Activated CD8-positive, alpha-beta T cell treated with anti-CD3 and anti-CD28 coated beads, Interleukin-2, amount 10 ng/mL, durations not matched to agents 7 days and 5 days (primary cell): ENCODE measurements at regions of chr3 and their contacts with region 1.

Region 1: DNA sequence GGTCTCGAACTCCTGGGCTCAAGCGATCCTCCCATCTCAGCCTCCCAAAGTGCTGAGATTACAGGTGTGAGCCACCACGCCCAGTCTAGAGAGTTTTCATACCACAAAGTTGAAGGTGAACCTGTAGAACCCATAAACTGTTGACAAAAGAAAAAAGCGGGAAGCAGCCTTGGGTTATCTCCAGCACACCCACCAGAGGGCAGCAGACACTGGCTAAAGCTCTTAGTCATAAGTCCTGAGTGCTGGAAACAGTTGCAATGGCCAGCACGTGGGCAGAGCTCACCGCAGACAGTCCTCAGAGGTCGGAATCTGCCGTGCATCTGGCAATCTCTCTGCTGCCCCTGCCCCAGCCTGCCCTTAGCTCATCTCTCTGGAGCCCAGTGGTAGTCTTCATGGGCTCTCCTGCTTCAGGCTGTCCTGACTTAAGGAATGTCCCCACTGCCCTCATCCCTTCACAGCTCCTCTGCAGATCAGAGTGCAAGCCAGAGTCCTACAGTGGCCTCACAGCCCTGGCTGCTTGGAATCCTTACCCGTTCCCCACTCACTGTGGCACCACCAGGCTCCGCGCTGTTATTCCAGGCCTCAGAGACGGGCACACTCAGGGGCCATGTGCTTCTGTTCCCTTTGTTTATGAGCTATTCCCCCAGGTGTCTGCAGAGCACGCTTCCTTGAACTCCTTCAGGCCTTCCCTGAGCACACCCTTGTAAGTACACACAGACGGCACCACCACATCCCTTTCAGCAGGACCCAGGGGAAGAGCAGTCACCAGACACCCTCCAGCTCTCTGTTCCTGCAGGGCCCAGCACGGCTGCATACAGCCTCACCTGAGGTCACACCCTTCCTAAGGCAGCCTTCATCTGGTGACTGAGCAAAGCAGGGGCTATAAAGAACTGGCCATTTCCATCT is 8.8 kb upstream of the ELP6 start:
- DNase-seq: peak; percentile 88
- ATAC-seq: peak; percentile 93
- H3K4me3 Mint-ChIP-seq: no peak overlapping the region
- H3K27ac Mint-ChIP-seq: peak overlapping the region; percentile 14
- H3K4me1 Mint-ChIP-seq: peaks cover 14% of the 10 kb centered on the region
- H3K27me3 Mint-ChIP-seq: no peaks in the 10 kb centered on the region

Region 2: GRCh38 chr3:47533481-47533880 is 11.1 kb after region 1 on chr3:
- CTCF ChIA-PET with region 1: interaction called, 16 read pairs
- POLR2A ChIA-PET with region 1: no interaction called
- DNase-seq: no peak
- ATAC-seq: no peak
- H3K4me3 Mint-ChIP-seq: no peak overlapping the region
- H3K27ac Mint-ChIP-seq: no peak overlapping the region
- H3K4me1 Mint-ChIP-seq: no peaks in the 10 kb centered on the region
- H3K27me3 Mint-ChIP-seq: peaks cover 7% of the 10 kb centered on the region

Region 3: DNA sequence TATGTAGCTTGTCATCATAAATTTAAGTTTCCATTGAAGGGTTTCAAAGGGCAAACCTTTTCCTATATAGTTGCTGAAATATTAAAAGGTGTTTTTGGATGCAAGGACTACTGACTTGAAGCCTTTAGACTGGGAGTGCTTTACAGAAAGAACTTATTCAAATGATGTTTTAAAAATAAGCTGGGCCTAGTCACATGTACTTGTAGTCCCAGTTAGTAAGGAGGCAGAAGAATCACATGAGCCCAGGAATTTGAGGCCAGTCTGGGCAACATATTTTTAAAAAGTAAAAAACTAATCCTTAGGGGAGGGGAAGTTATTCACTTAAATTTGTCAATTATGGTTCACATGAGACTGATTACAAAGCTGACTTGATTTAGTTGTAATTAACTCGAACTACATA is 194.3 kb after region 1 on chr3:
- CTCF ChIA-PET with region 1: no interaction called
- POLR2A ChIA-PET with region 1: no interaction called
- DNase-seq: no peak
- ATAC-seq: no peak
- H3K4me3 Mint-ChIP-seq: no peak overlapping the region
- H3K27ac Mint-ChIP-seq: no peak overlapping the region
- H3K4me1 Mint-ChIP-seq: peaks cover 2% of the 10 kb centered on the region
- H3K27me3 Mint-ChIP-seq: no peaks in the 10 kb centered on the region